Left cardiac atrium (tissue), 4 donors: ENCODE measurements at regions of chr2 and their contacts with region 1.

Region 1: GRCh38 chr2:96305091-96305978 is at the start of gene SNRNP200:
- DNase-seq: peak; percentile 90
- ATAC-seq: peak; percentile 100
- total RNA-seq, gene SNRNP200: 51.6 to 61.5 TPM

Region 2: DNA sequence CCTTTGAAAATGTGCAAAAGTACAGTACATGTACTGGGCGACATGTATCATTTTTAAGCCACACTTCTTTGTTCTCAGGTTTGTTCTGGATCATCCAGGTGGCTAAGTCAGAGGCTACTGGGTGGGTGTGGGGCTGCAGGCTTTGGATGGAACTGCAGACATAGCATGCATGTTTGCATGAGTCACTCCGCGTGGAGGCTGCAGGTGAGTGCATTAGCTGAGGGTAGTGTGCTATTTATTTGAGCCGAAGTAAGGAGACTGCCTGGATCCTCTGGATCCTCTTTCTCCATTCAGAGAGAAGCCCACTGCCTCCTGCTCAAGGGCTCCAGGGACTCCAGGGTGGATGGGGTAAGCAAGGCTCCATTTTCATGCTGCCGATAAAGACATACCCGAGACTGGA is 209.2 kb after region 1 on chr2:
- intact Hi-C with region 1: loop called in 1 of 2 experiments (anchors 10 kb)
- DNase-seq: no peak
- ATAC-seq: no peak